AG04449 (cell line): ENCODE measurements at regions of chr4 and their contacts with region 1.

Region 1: GRCh38 chr4:48329976-48330375 is 11.4 kb upstream of the SLAIN2 start:
- DNase-seq: peak; percentile 73
- H3K4me3 ChIP-seq: no peak overlapping the region
- CTCF ChIP-seq: no peak

Region 2: DNA sequence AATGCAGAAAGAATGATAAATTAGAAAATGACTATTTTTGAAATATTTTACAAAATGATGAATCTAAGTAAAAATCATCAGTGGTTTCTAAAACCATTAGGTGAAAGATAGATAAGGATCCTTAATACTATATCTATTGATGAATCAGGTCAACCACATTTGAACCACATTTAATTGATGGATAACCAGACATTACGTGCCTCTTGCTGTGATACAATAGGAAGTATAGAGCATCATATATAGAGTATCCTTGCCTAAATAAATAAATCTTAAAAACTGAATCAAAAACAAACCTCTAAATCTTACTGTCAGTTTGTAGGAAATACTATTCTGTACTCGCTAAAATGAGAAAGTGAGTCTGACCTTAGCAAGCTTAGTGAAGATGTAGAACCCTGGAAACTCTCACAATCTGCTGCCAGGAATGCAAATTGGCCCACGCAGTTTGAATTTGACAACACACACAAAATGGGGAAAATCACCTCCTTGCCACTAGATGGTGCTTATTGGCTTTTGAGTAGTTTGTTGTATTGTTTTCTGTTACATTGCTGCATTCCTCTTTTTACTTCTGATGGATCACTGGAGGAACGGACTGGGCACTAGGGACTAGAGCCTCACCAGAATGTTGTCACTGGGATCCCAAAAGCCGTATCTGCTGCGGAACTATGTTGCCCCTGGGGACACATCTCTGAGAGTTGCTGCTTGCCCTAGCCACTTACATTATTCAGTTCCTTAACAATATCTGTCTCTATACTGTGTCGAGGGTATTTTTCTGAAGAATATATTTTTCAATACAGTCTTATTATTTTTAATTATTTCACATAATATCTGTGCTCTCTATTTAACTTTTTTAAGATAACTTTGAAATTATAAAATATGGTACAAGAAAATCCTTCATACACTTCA is 14.0 kb before region 1 on chr4:
- CTCF ChIA-PET with region 1: interaction called, 13 read pairs
- POLR2A ChIA-PET with region 1: no interaction called
- DNase-seq: no peak
- H3K4me3 ChIP-seq: no peak overlapping the region
- CTCF ChIP-seq: peak; percentile 76

Region 3: GRCh38 chr4:48526406-48526805 is 196.4 kb after region 1 on chr4:
- CTCF ChIA-PET with region 1: no interaction called
- POLR2A ChIA-PET with region 1: no interaction called
- DNase-seq: no peak
- H3K4me3 ChIP-seq: no peak overlapping the region
- CTCF ChIP-seq: no peak